Mammary epithelial cell (primary cell): ENCODE measurements at regions of chr11 and their contacts with region 1.

Region 1: GRCh38 chr11:62048065-62048464 is 75.7 kb upstream of the INCENP start:
- DNase-seq: peak; percentile 62
- H3K4me3 ChIP-seq: no peak overlapping the region
- H3K27ac ChIP-seq: no peak overlapping the region
- H3K4me1 ChIP-seq: peaks cover 41% of the 10 kb centered on the region
- H3K27me3 ChIP-seq: no peaks in the 10 kb centered on the region
- CTCF ChIP-seq: no peak

Region 2: DNA sequence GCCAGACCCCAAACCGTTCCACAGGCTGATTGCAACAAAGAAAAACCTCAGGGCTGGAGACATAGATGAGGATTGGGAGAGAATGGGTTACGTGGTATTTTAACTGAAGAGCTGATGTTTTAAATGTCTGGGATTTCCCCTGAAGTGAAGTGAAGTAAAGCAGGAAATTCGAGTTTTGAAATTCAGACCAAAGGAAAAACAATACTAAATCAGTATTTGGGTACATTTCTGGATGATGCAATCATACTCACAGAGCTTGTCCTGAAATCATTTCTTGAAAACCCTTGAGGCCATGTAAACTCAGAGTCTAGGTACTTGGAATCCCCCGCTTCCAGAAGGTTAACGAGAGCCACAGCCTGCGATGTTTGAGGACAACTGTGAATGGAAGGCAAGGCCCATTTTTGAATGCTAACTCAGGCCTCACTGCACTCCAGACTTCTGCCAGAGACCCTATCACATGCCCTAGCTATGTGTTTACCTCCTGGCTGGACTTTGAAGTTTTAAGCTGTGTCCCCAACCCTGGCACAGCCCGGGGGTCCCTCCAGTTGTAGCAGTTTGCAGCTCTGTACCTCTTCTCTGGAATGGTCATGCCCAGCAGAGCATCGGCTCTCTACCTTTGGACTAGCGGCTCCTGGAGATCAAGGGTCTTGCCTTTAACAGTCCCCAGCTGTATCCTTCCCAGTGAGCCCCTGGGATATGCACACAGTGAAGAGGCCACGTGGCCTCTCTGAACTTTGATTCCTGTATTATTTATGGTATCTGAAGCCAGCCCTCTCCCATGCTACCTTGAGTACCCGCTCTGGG is 75.2 kb before region 1 on chr11:
- CTCF ChIA-PET with region 1: no interaction called
- dilution Hi-C with region 1: no loop called
- in situ Hi-C with region 1: no loop called
- intact Hi-C with region 1: loop called (anchors 1 kb)
- DNase-seq: peak; percentile 99
- H3K4me3 ChIP-seq: peak overlapping the region; percentile 2 to 11 (median 3)
- H3K27ac ChIP-seq: peak overlapping the region; percentile 99
- H3K4me1 ChIP-seq: peaks cover 78% of the 10 kb centered on the region
- H3K27me3 ChIP-seq: no peaks in the 10 kb centered on the region
- CTCF ChIP-seq: no peak

Region 3: GRCh38 chr11:62025487-62026105 is 22.5 kb before region 1 on chr11:
- CTCF ChIA-PET with region 1: no interaction called
- dilution Hi-C with region 1: no loop called
- in situ Hi-C with region 1: no loop called
- intact Hi-C with region 1: loop called (anchors 1 kb)
- DNase-seq: peak; percentile 98
- H3K4me3 ChIP-seq: no peak overlapping the region
- H3K27ac ChIP-seq: peak overlapping the region; percentile 87
- H3K4me1 ChIP-seq: peaks cover 14% of the 10 kb centered on the region
- H3K27me3 ChIP-seq: no peaks in the 10 kb centered on the region
- CTCF ChIP-seq: no peak